ENCODE measurements at regions of chr11 and their contacts with region 1.

Region 1: DNA sequence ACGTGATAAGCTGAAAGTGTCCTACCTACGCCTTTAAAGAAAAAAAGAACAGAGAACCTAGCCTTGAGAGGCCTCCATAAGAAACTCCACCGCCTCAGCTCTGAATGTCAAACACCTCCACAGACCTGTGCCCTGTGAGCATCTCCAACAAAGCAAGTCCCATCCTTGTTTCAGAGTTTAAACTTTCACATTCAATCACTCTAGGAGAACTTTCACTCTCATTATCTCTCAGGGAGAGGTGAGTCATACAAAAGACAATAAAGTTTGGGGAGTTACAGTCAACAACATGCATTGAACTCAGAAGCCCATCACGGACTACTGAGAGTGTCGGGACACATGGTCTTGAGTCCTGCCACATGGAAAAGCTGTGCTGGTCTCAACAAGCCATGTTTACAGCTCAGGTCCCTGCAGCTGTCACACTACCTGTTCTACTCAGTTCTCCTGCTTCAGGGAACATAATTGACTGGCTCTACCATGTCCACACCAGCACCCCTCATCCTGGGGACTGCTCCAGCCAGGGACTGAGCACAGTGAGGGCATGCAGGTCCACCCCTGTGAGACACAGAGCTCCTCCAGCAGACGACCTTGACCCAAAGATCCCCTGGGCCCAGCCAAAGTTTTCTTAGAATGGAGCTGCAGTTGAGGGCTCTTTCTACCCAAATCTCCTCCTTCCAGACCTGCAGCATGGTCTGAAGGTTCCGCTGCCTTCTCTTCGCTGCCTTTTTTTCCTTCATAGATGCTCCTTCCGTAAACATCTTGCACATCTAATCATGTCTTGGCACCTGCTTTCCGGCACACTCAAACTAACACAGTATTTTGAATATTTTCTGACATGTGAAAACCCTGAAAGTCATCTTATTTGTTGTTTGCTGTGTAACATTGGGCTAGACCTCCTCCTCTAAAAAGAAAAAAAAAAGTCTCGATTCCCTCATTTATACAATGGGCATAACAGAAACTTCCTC is 114.9 kb downstream of the ETS1 start:
- DNase-seq: peak in 5 of 9 donors; percentile 38 to 77 (median 57)
- ATAC-seq: peak; percentile 17
- H3K4me3 ChIP-seq: peak overlapping the region; percentile 63
- H3K4me3 Mint-ChIP-seq: peak overlapping the region; percentile 73 to 99 (median 82)
- H3K27ac ChIP-seq: peak overlapping the region; percentile 97
- H3K27ac Mint-ChIP-seq: peak overlapping the region; percentile 92 to 100 (median 98)
- H3K4me1 ChIP-seq: peaks cover 98 to 100% of the 10 kb centered on the region in 2 donors
- H3K4me1 Mint-ChIP-seq: peaks cover 76 to 100% (median 98%) of the 10 kb centered on the region in 7 donors
- H3K27me3 ChIP-seq: no peaks in the 10 kb centered on the region
- H3K27me3 Mint-ChIP-seq: no peaks in the 10 kb centered on the region

Region 2: DNA sequence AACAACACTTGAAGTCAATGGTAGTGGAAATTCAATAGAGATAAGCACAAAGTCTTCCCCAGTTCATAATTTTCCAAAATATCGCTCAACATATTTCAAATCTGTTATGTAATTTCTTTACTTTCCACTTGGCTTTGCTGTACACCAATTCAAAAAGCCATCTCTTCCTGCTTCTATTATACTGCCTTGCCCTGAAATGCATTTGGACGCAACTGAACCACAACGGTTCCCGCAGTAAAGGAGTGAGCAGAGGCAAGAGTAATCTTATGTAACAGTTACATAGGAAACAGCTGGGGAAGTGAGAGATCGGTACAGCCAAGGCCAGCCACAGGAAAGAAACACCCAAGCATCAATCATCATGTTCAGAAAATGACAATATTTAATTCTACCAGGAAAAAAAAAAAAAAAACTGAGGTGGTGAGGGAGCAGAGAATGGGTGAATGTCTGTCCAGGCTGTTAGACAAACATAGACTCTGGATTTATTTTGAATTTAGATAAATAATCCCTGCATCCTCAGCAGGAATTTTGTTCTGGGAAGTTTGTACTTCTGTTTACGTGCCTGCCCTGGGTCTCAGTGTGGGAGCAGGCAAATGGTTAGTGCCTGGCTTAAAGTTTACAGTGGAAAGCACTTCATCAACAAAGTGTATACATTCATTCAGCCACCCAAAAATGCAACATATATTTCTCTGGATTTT is 277.2 kb before region 1 on chr11:
- CTCF ChIA-PET with region 1: no interaction called
- POLR2A ChIA-PET with region 1: no interaction called
- intact Hi-C with region 1: loop called in 1 of 2 experiments (anchors 2 kb)
- DNase-seq: peak in 7 of 9 donors; percentile 63 to 85 (median 76)
- ATAC-seq: peak; percentile 86
- H3K4me3 ChIP-seq: no peak overlapping the region
- H3K4me3 Mint-ChIP-seq: peak overlapping the region in 9 of 10 donors; percentile 1 to 67 (median 49)
- H3K27ac ChIP-seq: peak overlapping the region; percentile 17
- H3K27ac Mint-ChIP-seq: peak overlapping the region in 8 of 9 donors; percentile 72 to 87 (median 81)
- H3K4me1 ChIP-seq: peaks cover 31 to 33% of the 10 kb centered on the region in 2 donors
- H3K4me1 Mint-ChIP-seq: peaks cover 31 to 45% (median 41%) of the 10 kb centered on the region in 7 donors
- H3K27me3 ChIP-seq: no peaks in the 10 kb centered on the region
- H3K27me3 Mint-ChIP-seq: peaks cover 0 to 2% (median 0%) of the 10 kb centered on the region in 5 donors

Region 3: DNA sequence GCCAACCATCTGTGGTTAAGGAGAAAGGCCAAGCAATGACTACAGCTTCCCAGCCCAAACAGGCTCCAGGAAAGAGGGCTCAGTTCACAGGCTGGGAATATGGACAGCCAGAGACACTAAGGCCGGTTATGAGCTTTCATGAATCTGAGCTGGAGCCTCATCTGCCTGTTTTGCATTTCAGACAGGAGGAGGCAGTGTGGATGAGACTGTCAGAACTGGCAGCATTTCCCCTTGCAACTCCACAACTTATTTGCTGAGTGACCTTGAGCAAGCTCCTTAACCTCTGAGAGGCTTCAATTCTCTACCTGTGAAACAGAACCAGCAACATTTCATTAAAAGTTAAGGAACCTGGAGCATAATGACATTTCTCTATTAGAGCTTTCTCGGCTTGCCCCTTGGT is 149.0 kb before region 1 on chr11:
- CTCF ChIA-PET with region 1: interaction called, 7 read pairs
- POLR2A ChIA-PET with region 1: interaction called, 18 read pairs
- intact Hi-C with region 1: loop called (anchors 1 kb)
- DNase-seq: peak in 7 of 9 donors; percentile 51 to 69 (median 60)
- ATAC-seq: no peak
- H3K4me3 ChIP-seq: peak overlapping the region; percentile 1
- H3K4me3 Mint-ChIP-seq: peak overlapping the region; percentile 21 to 89 (median 68)
- H3K27ac ChIP-seq: peak overlapping the region; percentile 91
- H3K27ac Mint-ChIP-seq: peak overlapping the region; percentile 95 to 99 (median 96)
- H3K4me1 ChIP-seq: peaks cover 80% of the 10 kb centered on the region in 2 donors
- H3K4me1 Mint-ChIP-seq: peaks cover 57 to 97% (median 87%) of the 10 kb centered on the region in 7 donors
- H3K27me3 ChIP-seq: no peaks in the 10 kb centered on the region
- H3K27me3 Mint-ChIP-seq: no peaks in the 10 kb centered on the region

Region 4: GRCh38 chr11:128422576-128423370 is 49.6 kb before region 1 on chr11:
- CTCF ChIA-PET with region 1: interaction called, 6 read pairs
- POLR2A ChIA-PET with region 1: interaction called, 3 read pairs
- intact Hi-C with region 1: loop called in 1 of 2 experiments (anchors 2 kb)
- DNase-seq: peak; percentile 67 to 94 (median 82)
- ATAC-seq: peak; percentile 96
- H3K4me3 ChIP-seq: peak overlapping the region; percentile 25
- H3K4me3 Mint-ChIP-seq: peak overlapping the region; percentile 50 to 86 (median 68)
- H3K27ac ChIP-seq: peak overlapping the region; percentile 56
- H3K27ac Mint-ChIP-seq: peak overlapping the region; percentile 86 to 98 (median 94)
- H3K4me1 ChIP-seq: peaks cover 17 to 33% of the 10 kb centered on the region in 2 donors
- H3K4me1 Mint-ChIP-seq: peaks cover 30 to 86% (median 66%) of the 10 kb centered on the region in 7 donors
- H3K27me3 ChIP-seq: no peaks in the 10 kb centered on the region
- H3K27me3 Mint-ChIP-seq: no peaks in the 10 kb centered on the region

Region 5: GRCh38 chr11:128437137-128437536 is 35.3 kb before region 1 on chr11:
- CTCF ChIA-PET with region 1: no interaction called
- POLR2A ChIA-PET with region 1: no interaction called
- intact Hi-C with region 1: no loop called
- DNase-seq: no peak
- ATAC-seq: no peak
- H3K4me3 ChIP-seq: no peak overlapping the region
- H3K4me3 Mint-ChIP-seq: no peak overlapping the region
- H3K27ac ChIP-seq: no peak overlapping the region
- H3K27ac Mint-ChIP-seq: peak overlapping the region in 1 of 9 donors; percentile 7
- H3K4me1 ChIP-seq: no peaks in the 10 kb centered on the region
- H3K4me1 Mint-ChIP-seq: peaks cover 8 to 40% (median 24%) of the 10 kb centered on the region in 7 donors
- H3K27me3 ChIP-seq: no peaks in the 10 kb centered on the region
- H3K27me3 Mint-ChIP-seq: no peaks in the 10 kb centered on the region

Region 6: DNA sequence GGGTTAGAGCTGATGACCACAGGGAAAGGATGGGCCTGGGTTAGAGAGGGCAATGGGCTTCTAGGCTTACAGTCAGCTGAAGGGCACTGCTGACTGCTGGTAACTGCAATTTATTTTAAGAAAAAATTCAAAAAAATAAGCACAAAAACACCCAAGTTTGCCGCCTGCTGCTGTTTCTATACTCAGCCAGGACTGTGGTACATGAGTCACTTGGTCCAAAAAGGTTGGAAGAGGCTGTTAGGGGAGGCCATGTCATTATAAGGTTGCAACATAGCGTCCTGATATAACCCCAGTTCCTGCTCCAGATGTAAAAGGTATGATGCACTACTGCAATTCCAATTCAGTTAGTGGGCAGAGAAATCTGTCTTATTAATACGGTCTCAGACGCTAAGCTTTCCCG is 16.1 kb after region 1 on chr11:
- CTCF ChIA-PET with region 1: interaction called, 7 read pairs
- POLR2A ChIA-PET with region 1: interaction called, 278 read pairs
- intact Hi-C with region 1: loop called (anchors 1 to 2 kb)
- DNase-seq: peak in 1 of 9 donors; percentile 73
- ATAC-seq: peak; percentile 31
- H3K4me3 ChIP-seq: no peak overlapping the region
- H3K4me3 Mint-ChIP-seq: peak overlapping the region; percentile 62 to 99 (median 76)
- H3K27ac ChIP-seq: peak overlapping the region; percentile 97
- H3K27ac Mint-ChIP-seq: peak overlapping the region; percentile 73 to 99 (median 96)
- H3K4me1 ChIP-seq: peaks cover 96% of the 10 kb centered on the region in 2 donors
- H3K4me1 Mint-ChIP-seq: peaks cover 70 to 100% (median 100%) of the 10 kb centered on the region in 7 donors
- H3K27me3 ChIP-seq: no peaks in the 10 kb centered on the region
- H3K27me3 Mint-ChIP-seq: no peaks in the 10 kb centered on the region

Region 7: GRCh38 chr11:128506999-128507611 is 34.7 kb after region 1 on chr11:
- CTCF ChIA-PET with region 1: interaction called, 15 read pairs
- POLR2A ChIA-PET with region 1: interaction called, 560 read pairs
- intact Hi-C with region 1: loop called (anchors 1 kb)
- DNase-seq: peak in 1 of 9 donors; percentile 60
- ATAC-seq: no peak
- H3K4me3 ChIP-seq: peak overlapping the region; percentile 96
- H3K4me3 Mint-ChIP-seq: peak overlapping the region; percentile 85 to 100 (median 98)
- H3K27ac ChIP-seq: peak overlapping the region; percentile 97
- H3K27ac Mint-ChIP-seq: peak overlapping the region; percentile 87 to 99 (median 97)
- H3K4me1 ChIP-seq: peaks cover 89 to 91% of the 10 kb centered on the region in 2 donors
- H3K4me1 Mint-ChIP-seq: peaks cover 70 to 98% (median 92%) of the 10 kb centered on the region in 7 donors
- H3K27me3 ChIP-seq: no peaks in the 10 kb centered on the region
- H3K27me3 Mint-ChIP-seq: no peaks in the 10 kb centered on the region

Region 8: GRCh38 chr11:128695539-128696221 is 223.3 kb after region 1 on chr11:
- CTCF ChIA-PET with region 1: no interaction called
- POLR2A ChIA-PET with region 1: interaction called, 3 read pairs
- intact Hi-C with region 1: loop called in 1 of 2 experiments (anchors 5 kb)
- DNase-seq: peak in 7 of 9 donors; percentile 39 to 63 (median 52)
- ATAC-seq: peak; percentile 75
- H3K4me3 ChIP-seq: peak overlapping the region; percentile 82
- H3K4me3 Mint-ChIP-seq: peak overlapping the region; percentile 89 to 99 (median 96)
- H3K27ac ChIP-seq: peak overlapping the region; percentile 86
- H3K27ac Mint-ChIP-seq: peak overlapping the region; percentile 72 to 96 (median 94)
- H3K4me1 ChIP-seq: peaks cover 45 to 53% of the 10 kb centered on the region in 2 donors
- H3K4me1 Mint-ChIP-seq: peaks cover 53 to 75% (median 67%) of the 10 kb centered on the region in 7 donors
- H3K27me3 ChIP-seq: no peaks in the 10 kb centered on the region
- H3K27me3 Mint-ChIP-seq: peaks cover 0 to 22% (median 0%) of the 10 kb centered on the region in 5 donors

Region 9: GRCh38 chr11:128928400-128928799 is 456.0 kb after region 1 on chr11:
- CTCF ChIA-PET with region 1: no interaction called
- POLR2A ChIA-PET with region 1: no interaction called
- intact Hi-C with region 1: no loop called
- DNase-seq: peak in 1 of 9 donors; percentile 16
- ATAC-seq: peak; percentile 52
- H3K4me3 ChIP-seq: peak overlapping the region; percentile 24
- H3K4me3 Mint-ChIP-seq: peak overlapping the region; percentile 11 to 56 (median 26)
- H3K27ac ChIP-seq: no peak overlapping the region
- H3K27ac Mint-ChIP-seq: peak overlapping the region in 2 of 9 donors; percentile 1 to 34
- H3K4me1 ChIP-seq: peaks cover 0 to 2% of the 10 kb centered on the region in 2 donors
- H3K4me1 Mint-ChIP-seq: peaks cover 10 to 14% (median 11%) of the 10 kb centered on the region in 7 donors
- H3K27me3 ChIP-seq: no peaks in the 10 kb centered on the region
- H3K27me3 Mint-ChIP-seq: peaks cover 0 to 7% (median 0%) of the 10 kb centered on the region in 5 donors